Stomach (tissue), 19 donors: ENCODE measurements at regions of chr9 and their contacts with region 1.

Region 1: GRCh38 chr9:136283291-136284235 is 20.3 kb downstream of the CCDC187 start:
- DNase-seq: peak; percentile 85 to 92
- H3K4me3 ChIP-seq: peak overlapping the region; percentile 29 to 43 (median 32)
- H3K27ac ChIP-seq: peak overlapping the region in 3 of 5 donors; percentile 14 to 66 (median 33)
- H3K4me1 ChIP-seq: peaks cover 7 to 15% (median 10%) of the 10 kb centered on the region in 4 donors
- H3K27me3 ChIP-seq: peaks cover 0 to 74% (median 7%) of the 10 kb centered on the region in 3 donors
- CTCF ChIP-seq: peak in 5 of 7 experiments; percentile 60 to 86 (median 75)
- EP300 ChIP-seq: no peak
- POLR2A ChIP-seq: no peak

Region 2: GRCh38 chr9:136170006-136170901 is 113.3 kb before region 1 on chr9:
- intact Hi-C with region 1: loop called (anchors 10 kb)
- DNase-seq: peak; percentile 30 to 60
- H3K4me3 ChIP-seq: no peak overlapping the region
- H3K27ac ChIP-seq: no peak overlapping the region
- H3K4me1 ChIP-seq: no peaks in the 10 kb centered on the region
- H3K27me3 ChIP-seq: peaks cover 0 to 47% (median 30%) of the 10 kb centered on the region in 3 donors
- CTCF ChIP-seq: peak in 5 of 7 experiments; percentile 29 to 61 (median 40)
- EP300 ChIP-seq: no peak
- POLR2A ChIP-seq: no peak

Region 3: DNA sequence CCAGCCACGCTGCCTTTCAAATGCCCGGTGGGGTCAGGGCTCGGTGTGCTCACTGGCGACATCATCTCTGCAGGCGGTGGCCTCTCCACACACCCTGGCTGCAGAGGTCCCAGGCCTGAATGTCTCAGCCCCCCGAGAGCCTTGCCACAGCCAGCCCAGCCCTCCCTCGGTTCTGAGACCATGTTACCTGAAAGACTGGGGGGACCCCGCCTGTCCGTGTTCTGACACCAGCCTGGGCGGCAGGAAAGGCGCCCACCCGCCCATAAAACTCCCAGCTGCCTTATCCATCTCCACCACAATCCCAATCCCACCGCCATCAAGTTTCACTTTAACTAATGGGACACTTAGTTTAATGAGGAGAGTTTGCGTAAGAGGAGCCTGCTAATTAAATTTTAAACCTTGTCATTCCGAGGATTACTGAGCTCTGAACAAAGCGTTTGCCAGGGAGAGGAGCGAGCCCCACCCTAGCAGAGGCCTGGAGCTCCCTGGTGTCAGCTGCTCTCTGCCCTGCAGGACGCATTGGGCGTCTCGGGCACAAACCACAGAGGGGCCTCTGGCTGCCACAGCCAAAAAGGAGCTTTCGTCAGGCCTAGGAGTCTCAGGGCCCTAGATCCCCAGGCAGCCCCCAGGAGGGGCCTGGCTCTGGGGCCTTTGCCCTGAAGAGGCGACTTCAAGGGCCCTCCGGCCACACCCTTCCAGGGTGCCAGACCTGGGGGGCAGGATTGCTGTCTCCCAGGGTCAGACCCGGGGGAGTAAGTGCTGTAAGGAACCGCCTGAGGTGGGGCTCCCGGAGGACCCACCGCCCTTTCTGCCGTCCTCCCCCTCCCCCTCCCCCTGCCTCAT is 93.9 kb before region 1 on chr9:
- intact Hi-C with region 1: no loop called
- DNase-seq: no peak
- H3K4me3 ChIP-seq: no peak overlapping the region
- H3K27ac ChIP-seq: no peak overlapping the region
- H3K4me1 ChIP-seq: peaks cover 0 to 21% (median 10%) of the 10 kb centered on the region in 4 donors
- H3K27me3 ChIP-seq: peaks cover 29 to 100% (median 82%) of the 10 kb centered on the region in 3 donors
- CTCF ChIP-seq: no peak
- EP300 ChIP-seq: no peak
- POLR2A ChIP-seq: no peak